ENCODE measurements at regions of chr6 and their contacts with region 1.

Region 1: GRCh38 chr6:121826156-121826810 is 390.8 kb downstream of the GJA1 start:
- DNase-seq: no peak
- ATAC-seq: peak in 5 of 8 donors; percentile 59 to 81 (median 74)
- H3K4me3 ChIP-seq: no peak overlapping the region
- H3K27ac ChIP-seq: peak overlapping the region in 3 of 10 donors; percentile 18 to 51 (median 45)
- H3K4me1 ChIP-seq: peaks cover 0 to 32% (median 20%) of the 10 kb centered on the region in 9 donors
- H3K27me3 ChIP-seq: no peaks in the 10 kb centered on the region
- CTCF ChIP-seq: no peak

Region 2: GRCh38 chr6:121711472-121711871 is 114.8 kb before region 1 on chr6:
- intact Hi-C with region 1: loop called in 2 of 10 experiments (anchors 5 to 10 kb)
- DNase-seq: peak in 1 of 2 donors; percentile 74
- ATAC-seq: peak; percentile 62 to 94 (median 87)
- H3K4me3 ChIP-seq: no peak overlapping the region
- H3K27ac ChIP-seq: peak overlapping the region in 5 of 10 donors; percentile 23 to 63 (median 37)
- H3K4me1 ChIP-seq: peaks cover 0 to 17% (median 0%) of the 10 kb centered on the region in 9 donors
- H3K27me3 ChIP-seq: no peaks in the 10 kb centered on the region
- CTCF ChIP-seq: no peak

Region 3: GRCh38 chr6:121717686-121718085 is 108.6 kb before region 1 on chr6:
- intact Hi-C with region 1: loop called in 2 of 10 experiments (anchors 5 to 10 kb)
- DNase-seq: no peak
- ATAC-seq: no peak
- H3K4me3 ChIP-seq: no peak overlapping the region
- H3K27ac ChIP-seq: no peak overlapping the region
- H3K4me1 ChIP-seq: peaks cover 0 to 2% (median 0%) of the 10 kb centered on the region in 9 donors
- H3K27me3 ChIP-seq: no peaks in the 10 kb centered on the region
- CTCF ChIP-seq: no peak

Region 4: GRCh38 chr6:121838842-121839241 is 12.6 kb after region 1 on chr6:
- intact Hi-C with region 1: no loop called
- DNase-seq: peak; percentile 37 to 66
- ATAC-seq: peak; percentile 79 to 98 (median 92)
- H3K4me3 ChIP-seq: no peak overlapping the region
- H3K27ac ChIP-seq: peak overlapping the region in 2 of 10 donors; percentile 4 to 36
- H3K4me1 ChIP-seq: peaks cover 0 to 20% (median 4%) of the 10 kb centered on the region in 9 donors
- H3K27me3 ChIP-seq: no peaks in the 10 kb centered on the region
- CTCF ChIP-seq: no peak